Cardiac septum (tissue), 1 donor: ENCODE measurements at regions of chr1 and their contacts with region 1.

Region 1: DNA sequence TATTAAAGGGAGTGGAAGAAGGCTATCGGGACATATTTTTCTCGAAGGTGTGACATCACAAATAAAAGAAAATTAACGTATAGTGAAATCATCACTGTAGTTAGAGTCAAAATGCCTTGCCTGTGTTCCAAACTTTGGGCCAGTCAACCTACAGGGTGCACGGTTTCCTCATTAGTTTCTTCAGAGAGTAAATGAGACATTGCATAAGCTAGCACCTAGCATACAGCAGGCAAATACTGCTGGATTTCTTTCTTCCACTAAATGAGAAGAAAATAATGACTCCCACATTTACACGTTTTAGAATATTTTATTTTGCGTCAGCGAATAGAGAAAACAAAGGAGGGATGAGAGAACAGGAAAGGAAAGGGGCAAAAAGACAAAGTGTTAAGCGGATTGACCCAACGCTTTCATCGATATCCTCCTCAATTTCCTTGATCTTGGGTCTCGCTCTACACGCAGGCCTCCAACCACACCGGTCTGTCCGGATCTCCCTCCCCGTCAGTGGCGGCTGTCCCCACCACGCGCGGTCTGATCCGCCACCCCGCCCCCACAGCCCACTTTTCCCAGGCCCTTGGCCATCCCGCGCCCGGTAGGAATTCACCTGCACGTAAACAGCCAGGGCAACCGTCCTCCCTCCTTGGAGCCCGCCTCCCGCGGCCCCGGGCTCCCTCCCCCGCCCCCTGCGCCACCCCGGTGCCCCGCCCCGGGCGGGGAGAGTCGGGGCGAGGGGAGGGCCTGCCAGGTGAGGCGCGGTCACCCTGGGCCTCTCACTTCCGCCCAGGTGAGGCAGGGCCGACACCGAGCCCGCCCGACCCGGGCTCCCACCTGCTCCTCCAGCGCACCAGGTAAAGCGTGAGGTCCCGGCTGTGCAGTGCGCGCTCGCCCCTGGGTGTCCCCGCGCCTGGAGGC is at the start of gene PATJ:
- DNase-seq: no peak
- total RNA-seq, gene PATJ: 71.2 TPM

Region 2: GRCh38 chr1:61424382-61424781 is 317.6 kb before region 1 on chr1:
- intact Hi-C with region 1: no loop called
- DNase-seq: no peak

Region 3: DNA sequence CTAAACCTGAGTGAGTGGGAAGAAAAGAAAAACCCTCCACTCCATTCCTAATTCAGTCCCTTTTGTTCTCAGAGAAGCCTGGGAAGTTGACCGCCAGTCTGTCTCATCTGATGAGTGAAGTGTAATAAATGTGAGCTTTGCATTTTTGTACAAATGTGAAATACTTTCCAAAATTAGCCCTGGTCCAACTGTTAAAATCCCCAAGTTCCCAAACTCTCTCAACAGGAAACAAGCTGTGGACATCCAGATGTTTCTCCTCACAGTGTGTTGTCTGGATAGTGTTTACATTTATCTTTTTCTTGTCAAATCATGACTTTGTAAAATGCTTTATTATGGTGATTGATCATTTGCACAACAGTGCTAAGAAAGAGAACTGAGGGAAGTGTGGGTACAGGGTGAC is 162.2 kb before region 1 on chr1:
- intact Hi-C with region 1: no loop called
- DNase-seq: no peak

Region 4: GRCh38 chr1:61708953-61709907 is 32.7 kb before region 1 on chr1:
- intact Hi-C with region 1: no loop called
- DNase-seq: no peak

Region 5: GRCh38 chr1:61724813-61725694 is 16.9 kb before region 1 on chr1 and contains the start of gene TM2D1:
- intact Hi-C with region 1: loop called (anchors 1 kb)
- DNase-seq: peak; percentile 96
- total RNA-seq, gene TM2D1: 34.2 TPM